ENCODE measurements at regions of chr11 and their contacts with region 1.

Region 1: DNA sequence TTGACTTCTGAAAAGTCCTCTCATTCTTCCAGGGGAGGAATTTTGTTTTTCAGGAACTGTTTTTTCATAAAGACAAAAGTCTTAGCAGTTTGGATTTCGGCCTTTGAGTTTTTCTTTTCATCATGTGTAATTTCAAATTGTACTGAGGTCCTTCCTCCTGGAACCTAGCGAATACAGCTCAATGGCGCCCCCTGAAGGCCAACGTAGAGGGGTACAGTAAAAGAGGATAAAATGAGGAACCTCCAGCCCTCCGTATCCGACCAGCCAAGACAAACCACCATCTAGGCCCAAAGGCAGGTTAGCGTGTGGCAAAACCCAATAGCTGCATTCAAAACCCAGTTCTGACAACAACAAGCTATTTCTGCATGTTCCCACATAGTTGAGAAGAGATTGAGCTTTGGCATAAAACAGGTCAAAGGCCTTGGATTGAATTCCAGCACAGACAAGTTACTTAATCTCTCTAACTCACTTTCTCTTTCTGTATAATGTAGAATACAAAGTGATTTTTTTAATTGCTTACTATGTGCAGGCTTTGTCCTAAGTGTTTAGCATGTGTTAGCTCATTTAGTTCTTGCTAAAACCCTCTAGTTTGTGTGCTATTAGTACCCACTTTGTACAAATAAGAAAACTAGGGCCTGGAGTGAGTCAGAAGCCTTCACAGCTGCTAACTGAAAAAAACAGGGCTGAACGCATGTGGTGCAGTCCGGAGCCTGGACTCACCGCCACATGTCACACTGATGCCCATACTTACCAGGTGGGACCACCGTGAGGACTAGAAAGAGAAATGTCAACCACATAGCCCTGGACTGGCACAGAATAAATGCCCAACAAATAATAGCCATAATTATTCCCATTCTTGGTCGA is 43.2 kb upstream of the ETS1 start:
- DNase-seq: peak; percentile 78 to 93 (median 86)
- ATAC-seq: peak; percentile 92
- H3K4me3 ChIP-seq: peak overlapping the region; percentile 17
- H3K4me3 Mint-ChIP-seq: peak overlapping the region; percentile 56 to 85 (median 76)
- H3K27ac ChIP-seq: peak overlapping the region; percentile 63
- H3K27ac Mint-ChIP-seq: peak overlapping the region; percentile 88 to 100 (median 95)
- H3K4me1 ChIP-seq: peaks cover 53 to 61% of the 10 kb centered on the region in 2 donors
- H3K4me1 Mint-ChIP-seq: peaks cover 46 to 73% (median 68%) of the 10 kb centered on the region in 7 donors
- H3K27me3 ChIP-seq: no peaks in the 10 kb centered on the region
- H3K27me3 Mint-ChIP-seq: no peaks in the 10 kb centered on the region

Region 2: DNA sequence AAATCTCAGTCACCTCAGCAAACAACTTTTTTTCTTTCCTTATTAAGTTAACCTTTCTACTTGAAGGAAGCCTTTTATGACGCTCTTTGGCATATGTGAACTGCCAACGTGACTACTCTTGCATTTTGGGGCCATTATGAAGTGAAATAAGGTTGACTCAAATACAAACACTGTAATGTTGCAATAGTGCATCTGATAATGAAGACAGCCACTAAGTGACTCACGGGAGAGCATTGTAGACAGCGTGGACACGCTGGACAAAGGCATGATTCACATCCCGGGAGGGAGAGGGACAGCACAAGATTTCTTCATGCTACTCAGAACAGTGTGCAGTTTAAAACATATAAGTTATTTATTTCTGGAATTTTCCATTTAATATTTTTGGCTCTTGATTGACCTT is 604.0 kb before region 1 on chr11:
- CTCF ChIA-PET with region 1: interaction called, 7 read pairs
- POLR2A ChIA-PET with region 1: no interaction called
- intact Hi-C with region 1: loop called (anchors 1 kb)
- DNase-seq: no peak
- ATAC-seq: peak; percentile 34
- H3K4me3 ChIP-seq: no peak overlapping the region
- H3K4me3 Mint-ChIP-seq: no peak overlapping the region
- H3K27ac ChIP-seq: no peak overlapping the region
- H3K27ac Mint-ChIP-seq: peak overlapping the region in 1 of 9 donors; percentile 12
- H3K4me1 ChIP-seq: peaks cover 0 to under 1% of the 10 kb centered on the region in 2 donors
- H3K4me1 Mint-ChIP-seq: peaks cover 0 to 5% (median 3%) of the 10 kb centered on the region in 7 donors
- H3K27me3 ChIP-seq: no peaks in the 10 kb centered on the region
- H3K27me3 Mint-ChIP-seq: peaks cover 0 to 37% (median 2%) of the 10 kb centered on the region in 5 donors

Region 3: DNA sequence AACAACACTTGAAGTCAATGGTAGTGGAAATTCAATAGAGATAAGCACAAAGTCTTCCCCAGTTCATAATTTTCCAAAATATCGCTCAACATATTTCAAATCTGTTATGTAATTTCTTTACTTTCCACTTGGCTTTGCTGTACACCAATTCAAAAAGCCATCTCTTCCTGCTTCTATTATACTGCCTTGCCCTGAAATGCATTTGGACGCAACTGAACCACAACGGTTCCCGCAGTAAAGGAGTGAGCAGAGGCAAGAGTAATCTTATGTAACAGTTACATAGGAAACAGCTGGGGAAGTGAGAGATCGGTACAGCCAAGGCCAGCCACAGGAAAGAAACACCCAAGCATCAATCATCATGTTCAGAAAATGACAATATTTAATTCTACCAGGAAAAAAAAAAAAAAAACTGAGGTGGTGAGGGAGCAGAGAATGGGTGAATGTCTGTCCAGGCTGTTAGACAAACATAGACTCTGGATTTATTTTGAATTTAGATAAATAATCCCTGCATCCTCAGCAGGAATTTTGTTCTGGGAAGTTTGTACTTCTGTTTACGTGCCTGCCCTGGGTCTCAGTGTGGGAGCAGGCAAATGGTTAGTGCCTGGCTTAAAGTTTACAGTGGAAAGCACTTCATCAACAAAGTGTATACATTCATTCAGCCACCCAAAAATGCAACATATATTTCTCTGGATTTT is 435.4 kb before region 1 on chr11:
- CTCF ChIA-PET with region 1: interaction called, 20 read pairs
- POLR2A ChIA-PET with region 1: interaction called, 3 read pairs
- intact Hi-C with region 1: loop called (anchors 1 kb)
- DNase-seq: peak in 7 of 9 donors; percentile 63 to 85 (median 76)
- ATAC-seq: peak; percentile 86
- H3K4me3 ChIP-seq: no peak overlapping the region
- H3K4me3 Mint-ChIP-seq: peak overlapping the region in 9 of 10 donors; percentile 1 to 67 (median 49)
- H3K27ac ChIP-seq: peak overlapping the region; percentile 17
- H3K27ac Mint-ChIP-seq: peak overlapping the region in 8 of 9 donors; percentile 72 to 87 (median 81)
- H3K4me1 ChIP-seq: peaks cover 31 to 33% of the 10 kb centered on the region in 2 donors
- H3K4me1 Mint-ChIP-seq: peaks cover 31 to 45% (median 41%) of the 10 kb centered on the region in 7 donors
- H3K27me3 ChIP-seq: no peaks in the 10 kb centered on the region
- H3K27me3 Mint-ChIP-seq: peaks cover 0 to 2% (median 0%) of the 10 kb centered on the region in 5 donors

Region 4: GRCh38 chr11:128323381-128323780 is 307.2 kb before region 1 on chr11:
- CTCF ChIA-PET with region 1: interaction called, 40 read pairs
- POLR2A ChIA-PET with region 1: interaction called, 12 read pairs
- intact Hi-C with region 1: loop called (anchors 1 kb)
- DNase-seq: peak in 7 of 9 donors; percentile 51 to 69 (median 60)
- ATAC-seq: no peak
- H3K4me3 ChIP-seq: peak overlapping the region; percentile 1
- H3K4me3 Mint-ChIP-seq: peak overlapping the region; percentile 21 to 89 (median 68)
- H3K27ac ChIP-seq: peak overlapping the region; percentile 91
- H3K27ac Mint-ChIP-seq: peak overlapping the region; percentile 95 to 99 (median 96)
- H3K4me1 ChIP-seq: peaks cover 80% of the 10 kb centered on the region in 2 donors
- H3K4me1 Mint-ChIP-seq: peaks cover 57 to 97% (median 87%) of the 10 kb centered on the region in 7 donors
- H3K27me3 ChIP-seq: no peaks in the 10 kb centered on the region
- H3K27me3 Mint-ChIP-seq: no peaks in the 10 kb centered on the region

Region 5: DNA sequence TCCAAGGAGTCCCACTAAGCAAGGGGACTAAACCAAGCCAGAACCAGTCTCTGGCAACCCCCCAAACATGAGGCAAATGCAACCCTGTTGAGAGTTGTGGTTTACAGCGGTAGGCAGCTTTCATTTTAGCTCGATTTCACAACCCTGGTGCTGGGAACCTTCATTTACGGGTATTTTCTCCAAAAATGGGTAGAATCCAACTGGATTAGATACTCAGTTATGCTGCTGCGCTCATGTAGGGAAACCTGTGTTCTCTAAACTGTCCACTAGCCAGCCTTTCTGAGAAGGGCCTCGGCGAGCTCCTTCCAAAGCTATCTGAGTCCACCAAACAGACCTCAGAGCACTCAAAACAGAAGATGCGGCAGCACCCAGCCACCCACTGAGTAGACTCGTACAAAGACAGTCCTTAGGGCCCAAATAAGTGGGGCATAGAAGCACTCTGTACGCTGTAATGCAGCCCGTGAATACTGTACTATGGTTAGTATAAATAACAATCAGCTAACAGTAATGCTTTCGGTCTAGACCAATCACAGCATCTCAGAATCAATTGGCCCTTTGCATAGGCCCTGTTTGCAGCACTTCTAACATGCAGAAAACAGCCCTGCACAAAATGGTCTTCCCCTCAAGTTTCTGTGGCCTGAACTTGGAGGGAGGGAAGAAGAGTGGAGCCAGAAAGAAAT is 147.9 kb before region 1 on chr11:
- CTCF ChIA-PET with region 1: interaction called, 8 read pairs
- POLR2A ChIA-PET with region 1: interaction called, 12 read pairs
- intact Hi-C with region 1: no loop called
- DNase-seq: peak in 6 of 9 donors; percentile 62 to 86 (median 68)
- ATAC-seq: peak; percentile 74
- H3K4me3 ChIP-seq: peak overlapping the region; percentile 47
- H3K4me3 Mint-ChIP-seq: peak overlapping the region; percentile 73 to 99 (median 82)
- H3K27ac ChIP-seq: peak overlapping the region; percentile 97
- H3K27ac Mint-ChIP-seq: peak overlapping the region; percentile 92 to 99 (median 98)
- H3K4me1 ChIP-seq: peaks cover 89 to 95% of the 10 kb centered on the region in 2 donors
- H3K4me1 Mint-ChIP-seq: peaks cover 82 to 100% (median 99%) of the 10 kb centered on the region in 7 donors
- H3K27me3 ChIP-seq: no peaks in the 10 kb centered on the region
- H3K27me3 Mint-ChIP-seq: no peaks in the 10 kb centered on the region

Region 6: GRCh38 chr11:128512474-128512996 is 118.1 kb before region 1 on chr11:
- CTCF ChIA-PET with region 1: interaction called, 86 read pairs
- POLR2A ChIA-PET with region 1: interaction called, 546 read pairs
- intact Hi-C with region 1: loop called in 1 of 2 experiments (anchors 1 kb)
- DNase-seq: peak in 5 of 9 donors; percentile 26 to 56 (median 47)
- ATAC-seq: peak; percentile 40
- H3K4me3 ChIP-seq: peak overlapping the region; percentile 96
- H3K4me3 Mint-ChIP-seq: peak overlapping the region; percentile 94 to 100 (median 98)
- H3K27ac ChIP-seq: peak overlapping the region; percentile 97
- H3K27ac Mint-ChIP-seq: peak overlapping the region; percentile 92 to 99 (median 97)
- H3K4me1 ChIP-seq: peaks cover 54 to 59% of the 10 kb centered on the region in 2 donors
- H3K4me1 Mint-ChIP-seq: peaks cover 50 to 94% (median 77%) of the 10 kb centered on the region in 7 donors
- H3K27me3 ChIP-seq: no peaks in the 10 kb centered on the region
- H3K27me3 Mint-ChIP-seq: no peaks in the 10 kb centered on the region

Region 7: GRCh38 chr11:128695539-128696221 is 65.1 kb after region 1 on chr11:
- CTCF ChIA-PET with region 1: interaction called, 3 read pairs
- POLR2A ChIA-PET with region 1: interaction called, 3 read pairs
- intact Hi-C with region 1: loop called in 1 of 2 experiments (anchors 5 kb)
- DNase-seq: peak in 7 of 9 donors; percentile 39 to 63 (median 52)
- ATAC-seq: peak; percentile 75
- H3K4me3 ChIP-seq: peak overlapping the region; percentile 82
- H3K4me3 Mint-ChIP-seq: peak overlapping the region; percentile 89 to 99 (median 96)
- H3K27ac ChIP-seq: peak overlapping the region; percentile 86
- H3K27ac Mint-ChIP-seq: peak overlapping the region; percentile 72 to 96 (median 94)
- H3K4me1 ChIP-seq: peaks cover 45 to 53% of the 10 kb centered on the region in 2 donors
- H3K4me1 Mint-ChIP-seq: peaks cover 53 to 75% (median 67%) of the 10 kb centered on the region in 7 donors
- H3K27me3 ChIP-seq: no peaks in the 10 kb centered on the region
- H3K27me3 Mint-ChIP-seq: peaks cover 0 to 22% (median 0%) of the 10 kb centered on the region in 5 donors

Measured in naive thymus-derived CD4-positive, alpha-beta T cell (primary cell).